IMR-90 (cell line): ENCODE measurements at regions of chr12 and their contacts with region 1.

Region 1: DNA sequence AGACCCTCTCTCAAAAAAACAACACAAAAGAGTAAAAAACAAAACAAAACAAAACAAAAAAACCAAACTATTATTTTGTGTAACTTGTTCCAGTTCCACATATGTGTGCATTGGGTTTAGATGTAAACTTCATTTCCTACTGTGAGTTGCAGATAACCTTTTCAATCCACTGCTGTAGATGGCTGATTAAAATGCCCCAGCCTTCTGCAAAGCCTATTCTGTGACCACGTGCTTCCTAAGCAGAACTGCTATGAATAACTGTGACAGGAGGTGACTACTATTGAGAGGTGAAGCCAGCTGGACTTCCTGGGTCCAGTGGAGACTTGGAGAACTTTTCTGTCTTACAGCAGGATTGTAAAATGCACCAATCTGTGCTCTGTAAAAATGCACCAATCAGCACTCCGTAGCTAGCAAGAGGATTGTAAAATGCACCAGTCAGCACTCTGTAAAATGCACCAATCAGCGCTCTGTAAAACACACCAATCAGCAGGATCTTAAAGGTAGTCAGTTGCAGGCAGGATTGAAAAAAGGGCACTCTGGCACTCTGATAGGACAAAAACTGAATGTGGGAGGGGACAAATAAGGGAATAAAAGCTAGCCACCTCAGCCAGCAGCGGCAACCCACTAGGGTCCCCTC is 10.3 kb upstream of the ELK3 start:
- DNase-seq: no peak
- ATAC-seq: no peak
- H3K4me3 ChIP-seq: no peak overlapping the region
- H3K27ac ChIP-seq: no peak overlapping the region
- H3K4me1 ChIP-seq: peaks cover 2% of the 10 kb centered on the region; the same call in 1 of the 2 replicates
- H3K27me3 ChIP-seq: no peaks in the 10 kb centered on the region; the same call in 1 of the 2 replicates
- CTCF ChIP-seq: no peak
- POLR2A ChIP-seq: no peak
- RAD21 ChIP-seq: no peak

Region 2: GRCh38 chr12:96136161-96136560 is 47.7 kb before region 1 on chr12:
- CTCF ChIA-PET with region 1: no interaction called
- POLR2A ChIA-PET with region 1: no interaction called
- dilution Hi-C with region 1: no loop called
- in situ Hi-C with region 1: no loop called
- intact Hi-C with region 1: loop called (anchors 5 kb)
- DNase-seq: peak; percentile 61
- ATAC-seq: peak; percentile 59
- H3K4me3 ChIP-seq: no peak overlapping the region
- H3K27ac ChIP-seq: no peak overlapping the region
- H3K4me1 ChIP-seq: peaks cover 7% of the 10 kb centered on the region
- H3K27me3 ChIP-seq: peaks cover 14% of the 10 kb centered on the region
- CTCF ChIP-seq: no peak
- POLR2A ChIP-seq: no peak
- RAD21 ChIP-seq: no peak